Mammary epithelial cell (primary cell): ENCODE measurements at regions of chr2 and their contacts with region 1.

Region 1: GRCh38 chr2:26033818-26034636 is at the start of gene RAB10:
- DNase-seq: peak; percentile 100
- H3K4me3 ChIP-seq: peak within 1 kb of the TSS; percentile 80 to 94 (median 92)
- H3K27ac ChIP-seq: peak within 1 kb of the TSS; percentile 96
- H3K4me1 ChIP-seq: peaks cover 10% of the 10 kb centered on the region
- H3K27me3 ChIP-seq: no peaks in the 10 kb centered on the region
- CTCF ChIP-seq: no peak
- total RNA-seq, gene RAB10: 127 to 188 TPM

Region 2: DNA sequence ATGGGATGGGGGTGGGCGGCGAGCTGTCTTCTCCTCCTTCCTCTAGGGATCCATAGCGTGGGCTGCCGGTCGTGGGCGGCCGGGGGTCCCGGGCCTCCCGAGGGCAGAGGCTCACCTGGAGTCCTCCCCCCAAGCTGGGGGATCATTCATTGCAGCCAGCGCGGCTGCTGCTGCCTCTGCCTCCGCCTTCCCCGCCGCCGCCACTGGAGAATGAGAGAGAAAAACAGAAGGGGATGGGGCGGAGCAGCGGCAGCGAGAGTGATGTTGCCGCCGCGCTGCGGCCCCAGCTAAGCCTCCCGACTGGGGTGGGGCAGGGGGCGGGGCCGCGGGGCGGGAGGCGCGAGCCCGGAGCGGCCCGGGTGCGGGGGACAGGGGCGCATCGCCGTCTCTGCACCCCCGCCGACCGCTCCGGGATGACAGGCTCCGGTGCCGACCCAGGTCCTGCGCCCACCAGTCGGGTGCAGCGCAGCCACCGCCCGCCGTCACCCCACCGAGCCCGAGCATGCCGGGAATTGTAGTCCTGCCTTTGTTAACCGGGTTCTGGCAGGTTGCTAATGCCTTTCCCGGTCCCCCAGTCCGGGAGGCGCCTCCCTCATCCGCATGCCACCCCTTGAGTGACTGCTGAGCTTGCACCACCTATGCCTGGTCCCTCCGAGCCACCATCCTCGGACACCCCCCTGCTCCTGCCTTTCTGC is 51.6 kb before region 1 on chr2 and contains the start of gene KIF3C:
- CTCF ChIA-PET with region 1: no interaction called
- dilution Hi-C with region 1: no loop called
- in situ Hi-C with region 1: no loop called
- intact Hi-C with region 1: no loop called
- DNase-seq: peak; percentile 70
- H3K4me3 ChIP-seq: peak within 1 kb of the TSS; percentile 74 to 91 (median 78)
- H3K27ac ChIP-seq: peak within 1 kb of the TSS; percentile 68
- H3K4me1 ChIP-seq: peaks cover 30% of the 10 kb centered on the region
- H3K27me3 ChIP-seq: no peaks in the 10 kb centered on the region
- CTCF ChIP-seq: no peak
- total RNA-seq, gene KIF3C: 30.7 to 35.3 TPM

Region 3: GRCh38 chr2:26001743-26002351 is 32.2 kb before region 1 on chr2:
- CTCF ChIA-PET with region 1: no interaction called
- dilution Hi-C with region 1: no loop called
- in situ Hi-C with region 1: no loop called
- intact Hi-C with region 1: loop called (anchors 1 kb)
- DNase-seq: no peak
- H3K4me3 ChIP-seq: no peak overlapping the region
- H3K27ac ChIP-seq: peak overlapping the region; percentile 37
- H3K4me1 ChIP-seq: peaks cover 23% of the 10 kb centered on the region
- H3K27me3 ChIP-seq: no peaks in the 10 kb centered on the region
- CTCF ChIP-seq: no peak

Region 4: GRCh38 chr2:26008822-26009566 is 25.0 kb before region 1 on chr2:
- CTCF ChIA-PET with region 1: no interaction called
- dilution Hi-C with region 1: no loop called
- in situ Hi-C with region 1: no loop called
- intact Hi-C with region 1: loop called (anchors 1 kb)
- DNase-seq: peak; percentile 100
- H3K4me3 ChIP-seq: no peak overlapping the region
- H3K27ac ChIP-seq: peak overlapping the region; percentile 91
- H3K4me1 ChIP-seq: peaks cover 35% of the 10 kb centered on the region
- H3K27me3 ChIP-seq: no peaks in the 10 kb centered on the region
- CTCF ChIP-seq: no peak

Region 5: GRCh38 chr2:26018176-26018716 is 15.8 kb before region 1 on chr2:
- CTCF ChIA-PET with region 1: interaction called, 3 read pairs
- dilution Hi-C with region 1: no loop called
- in situ Hi-C with region 1: no loop called
- intact Hi-C with region 1: loop called (anchors 1 kb)
- DNase-seq: peak; percentile 95
- H3K4me3 ChIP-seq: no peak overlapping the region
- H3K27ac ChIP-seq: peak overlapping the region; percentile 81
- H3K4me1 ChIP-seq: peaks cover 17% of the 10 kb centered on the region
- H3K27me3 ChIP-seq: no peaks in the 10 kb centered on the region
- CTCF ChIP-seq: no peak

Region 6: DNA sequence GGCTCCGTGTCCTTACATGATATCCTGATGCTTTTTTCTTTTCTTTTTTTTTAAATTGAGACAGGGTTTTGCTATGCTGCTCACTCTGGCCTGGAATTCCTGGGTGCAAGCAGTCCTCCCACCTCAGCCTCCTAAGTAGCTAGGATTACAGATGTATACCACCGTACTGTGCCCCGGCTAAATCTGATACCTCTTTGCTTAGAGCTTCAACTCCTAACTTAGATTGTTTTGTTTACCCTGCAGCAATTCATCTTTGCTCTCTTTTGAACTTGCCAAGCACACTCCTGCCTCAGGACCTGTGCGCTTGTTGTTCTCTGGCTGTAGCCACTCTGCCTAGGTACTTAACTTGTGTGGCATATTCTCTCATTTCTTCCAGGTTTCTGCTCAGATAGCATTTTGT is 24.4 kb after region 1 on chr2:
- CTCF ChIA-PET with region 1: no interaction called
- dilution Hi-C with region 1: no loop called
- in situ Hi-C with region 1: no loop called
- intact Hi-C with region 1: no loop called
- DNase-seq: no peak
- H3K4me3 ChIP-seq: no peak overlapping the region
- H3K27ac ChIP-seq: no peak overlapping the region
- H3K4me1 ChIP-seq: no peaks in the 10 kb centered on the region
- H3K27me3 ChIP-seq: peaks cover 2% of the 10 kb centered on the region
- CTCF ChIP-seq: no peak

Region 7: GRCh38 chr2:26068602-26069298 is 34.7 kb after region 1 on chr2:
- CTCF ChIA-PET with region 1: no interaction called
- dilution Hi-C with region 1: no loop called
- in situ Hi-C with region 1: no loop called
- intact Hi-C with region 1: loop called (anchors 1 kb)
- DNase-seq: peak; percentile 84
- H3K4me3 ChIP-seq: peak overlapping the region in 1 of 3 experiments; percentile 19
- H3K27ac ChIP-seq: peak overlapping the region; percentile 46
- H3K4me1 ChIP-seq: peaks cover 18% of the 10 kb centered on the region
- H3K27me3 ChIP-seq: no peaks in the 10 kb centered on the region
- CTCF ChIP-seq: no peak

Region 8: GRCh38 chr2:26088032-26088643 is 54.1 kb after region 1 on chr2:
- CTCF ChIA-PET with region 1: interaction called, 6 read pairs
- dilution Hi-C with region 1: no loop called
- in situ Hi-C with region 1: no loop called
- intact Hi-C with region 1: loop called (anchors 2 kb)
- DNase-seq: no peak
- H3K4me3 ChIP-seq: no peak overlapping the region
- H3K27ac ChIP-seq: no peak overlapping the region
- H3K4me1 ChIP-seq: peaks cover 6% of the 10 kb centered on the region
- H3K27me3 ChIP-seq: no peaks in the 10 kb centered on the region
- CTCF ChIP-seq: peak; percentile 67 to 74

Region 9: GRCh38 chr2:26792720-26793119 is 758.7 kb after region 1 on chr2:
- CTCF ChIA-PET with region 1: no interaction called
- dilution Hi-C with region 1: no loop called
- in situ Hi-C with region 1: no loop called
- intact Hi-C with region 1: no loop called
- DNase-seq: no peak
- H3K4me3 ChIP-seq: no peak overlapping the region
- H3K27ac ChIP-seq: no peak overlapping the region
- H3K4me1 ChIP-seq: peaks cover 3% of the 10 kb centered on the region
- H3K27me3 ChIP-seq: no peaks in the 10 kb centered on the region
- CTCF ChIP-seq: no peak